GM12878 (cell line): ENCODE measurements at regions of chr3 and their contacts with region 1.

Region 1: GRCh38 chr3:123941121-123941520 is 19.9 kb downstream of the CCDC14 start:
- DNase-seq: no peak
- ATAC-seq: no peak
- H3K4me3 ChIP-seq: no peak overlapping the region
- H3K27ac ChIP-seq: no peak overlapping the region
- H3K4me1 ChIP-seq: no peaks in the 10 kb centered on the region
- H3K27me3 ChIP-seq: no peaks in the 10 kb centered on the region
- CTCF ChIP-seq: no peak; a peak in 1 of 6 replicates
- EP300 ChIP-seq: no peak
- POLR2A ChIP-seq: no peak
- RAD21 ChIP-seq: peak; percentile 27; the same call in 1 of the 2 replicates

Region 2: DNA sequence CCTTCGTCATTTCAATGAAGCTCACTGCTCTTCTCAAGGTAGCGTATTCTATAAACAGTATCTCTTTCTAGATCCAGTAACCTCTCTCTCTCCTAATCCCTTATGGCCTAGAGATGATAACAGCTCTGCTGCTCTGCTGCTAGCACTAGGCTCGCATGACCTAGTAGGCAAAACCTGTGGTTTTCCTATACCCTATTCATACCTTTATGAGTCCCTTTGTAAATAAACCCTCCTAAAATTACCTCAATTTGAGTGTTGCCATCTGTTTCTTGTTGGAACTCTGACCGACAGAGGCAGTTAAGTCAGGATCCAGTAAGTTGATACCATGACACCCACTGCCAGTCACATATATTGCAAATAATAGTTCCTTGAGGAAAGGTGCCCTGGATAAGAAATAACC is 12.6 kb after region 1 on chr3:
- CTCF ChIA-PET with region 1: interaction called, 15 read pairs
- POLR2A ChIA-PET with region 1: no interaction called
- RAD21 ChIA-PET with region 1: interaction called, 5 read pairs
- SMC1A ChIA-PET with region 1: interaction called, 3 read pairs
- in situ Hi-C with region 1: no loop called
- intact Hi-C with region 1: no loop called
- DNase-seq: no peak
- ATAC-seq: peak; percentile 92
- H3K4me3 ChIP-seq: 0 out of 2 replicates have a peak overlapping the region, but pooled peaks have one; percentile 1
- H3K27ac ChIP-seq: no peak overlapping the region
- H3K4me1 ChIP-seq: peaks cover 5% of the 10 kb centered on the region; the same call in 1 of the 2 replicates
- H3K27me3 ChIP-seq: no peaks in the 10 kb centered on the region
- CTCF ChIP-seq: no peak
- EP300 ChIP-seq: no peak
- POLR2A ChIP-seq: no peak
- RAD21 ChIP-seq: no peak

Region 3: GRCh38 chr3:123980539-123980938 is 39.4 kb after region 1 on chr3:
- CTCF ChIA-PET with region 1: interaction called, 17 read pairs
- POLR2A ChIA-PET with region 1: no interaction called
- RAD21 ChIA-PET with region 1: interaction called, 9 read pairs
- SMC1A ChIA-PET with region 1: interaction called, 7 read pairs
- in situ Hi-C with region 1: no loop called
- intact Hi-C with region 1: no loop called
- DNase-seq: no peak
- ATAC-seq: no peak
- H3K4me3 ChIP-seq: no peak overlapping the region
- H3K27ac ChIP-seq: no peak overlapping the region
- H3K4me1 ChIP-seq: no peaks in the 10 kb centered on the region
- H3K27me3 ChIP-seq: no peaks in the 10 kb centered on the region; a peak in 1 of 4 replicates
- CTCF ChIP-seq: no peak
- EP300 ChIP-seq: no peak
- POLR2A ChIP-seq: no peak
- RAD21 ChIP-seq: no peak